ENCODE measurements at regions of chr10 and their contacts with region 1.

Region 1: DNA sequence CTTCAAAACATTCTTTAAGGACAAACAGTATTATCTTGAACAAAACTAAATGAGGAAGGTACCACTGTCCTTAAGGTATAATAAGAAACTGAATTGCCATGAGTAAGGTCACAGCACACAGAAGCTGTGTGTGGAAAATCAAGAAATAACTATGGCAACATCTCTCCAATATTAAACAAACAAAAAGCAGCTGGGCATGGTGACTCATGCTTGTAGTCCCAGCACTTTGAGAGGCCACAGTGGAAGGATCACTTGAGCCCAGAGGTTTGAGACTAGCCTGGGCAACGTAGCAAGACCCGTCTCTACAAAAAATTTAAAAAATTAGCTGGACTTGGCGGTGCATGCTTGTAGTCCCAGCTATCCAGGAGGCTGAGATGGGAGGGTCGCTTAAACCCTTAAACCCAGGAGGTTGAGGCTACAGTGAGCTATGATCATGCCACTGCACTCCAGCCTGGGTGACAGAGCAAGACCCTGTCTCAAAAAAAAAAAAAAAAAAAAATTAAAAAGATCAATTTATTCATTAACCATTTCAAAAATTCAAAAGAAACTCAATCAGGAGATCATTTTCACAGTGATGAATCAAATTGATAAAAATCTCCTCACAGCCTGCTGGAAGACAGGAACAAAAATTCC is 195.4 kb downstream of the SKIDA1 start:
- DNase-seq: no peak
- ATAC-seq: peak; percentile 83
- H3K4me3 ChIP-seq: no peak overlapping the region
- H3K27ac ChIP-seq: peak overlapping the region; percentile 79
- H3K4me1 ChIP-seq: peaks cover 30% of the 10 kb centered on the region
- H3K27me3 ChIP-seq: no peaks in the 10 kb centered on the region
- CTCF ChIP-seq: no peak

Region 2: DNA sequence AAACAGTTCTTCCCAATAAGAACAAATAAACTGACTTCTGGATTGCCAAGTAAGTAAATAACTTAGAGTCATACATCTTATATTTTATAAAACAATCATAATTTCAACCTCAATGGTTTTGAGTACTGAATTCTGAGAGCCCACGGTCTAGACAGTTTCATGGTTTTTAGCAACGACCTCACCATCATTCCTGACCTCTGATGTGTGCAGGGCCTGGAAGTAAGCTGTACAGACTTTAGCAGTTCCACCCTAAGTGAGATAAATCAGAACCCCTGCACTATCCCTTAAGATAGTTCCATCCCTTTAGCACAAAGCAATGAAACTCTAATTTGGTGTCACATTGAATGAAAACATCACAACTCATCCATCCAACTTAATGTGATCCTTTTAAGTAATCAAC is 519.0 kb before region 1 on chr10:
- CTCF ChIA-PET with region 1: no interaction called
- POLR2A ChIA-PET with region 1: no interaction called
- in situ Hi-C with region 1: no loop called
- intact Hi-C with region 1: no loop called
- DNase-seq: no peak
- ATAC-seq: no peak
- H3K4me3 ChIP-seq: no peak overlapping the region
- H3K27ac ChIP-seq: no peak overlapping the region
- H3K4me1 ChIP-seq: no peaks in the 10 kb centered on the region
- H3K27me3 ChIP-seq: no peaks in the 10 kb centered on the region
- CTCF ChIP-seq: no peak

Region 3: GRCh38 chr10:21352886-21353285 is 22.8 kb after region 1 on chr10:
- CTCF ChIA-PET with region 1: no interaction called
- POLR2A ChIA-PET with region 1: interaction called, 16 read pairs
- in situ Hi-C with region 1: no loop called
- intact Hi-C with region 1: no loop called
- DNase-seq: no peak
- ATAC-seq: no peak
- H3K4me3 ChIP-seq: no peak overlapping the region
- H3K27ac ChIP-seq: peak overlapping the region; percentile 94
- H3K4me1 ChIP-seq: peaks cover 24% of the 10 kb centered on the region
- H3K27me3 ChIP-seq: no peaks in the 10 kb centered on the region
- CTCF ChIP-seq: no peak

Measured in Panc1 (cell line).